T-cell (primary cell): ENCODE measurements at regions of chr13 and their contacts with region 1.

Region 1: DNA sequence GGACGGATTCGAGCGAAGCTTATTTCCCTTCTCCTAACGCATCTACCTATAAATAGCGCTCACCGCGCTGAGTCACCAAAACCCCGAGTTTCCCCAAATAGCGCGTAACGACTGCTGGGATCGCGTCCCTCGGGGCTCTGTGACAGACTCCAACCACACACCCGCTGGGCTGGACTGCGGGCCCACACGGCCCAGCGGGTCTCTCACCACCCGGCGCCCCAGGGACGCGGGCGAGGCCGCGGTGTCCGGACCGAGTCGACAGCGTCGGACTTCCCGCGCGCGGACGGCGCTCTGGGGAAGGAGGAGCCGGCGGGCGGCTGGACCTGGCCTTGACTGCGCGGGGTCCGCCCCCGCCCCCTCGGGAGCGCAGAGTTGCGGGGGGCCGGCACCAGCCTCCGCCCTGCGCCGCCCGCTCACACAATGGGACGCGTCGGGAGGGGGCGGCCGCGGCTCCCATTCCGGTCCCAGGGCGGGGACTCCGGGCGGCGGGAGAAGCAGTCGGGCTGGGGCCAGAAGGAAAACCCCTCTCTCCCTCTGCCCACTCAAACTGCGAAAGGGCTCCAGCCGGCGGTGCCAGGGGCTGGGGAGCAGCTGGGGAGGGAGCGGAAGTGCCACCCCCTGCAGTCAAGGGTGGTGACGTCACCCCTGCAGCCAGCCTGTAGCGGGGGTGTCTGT is 108.8 kb downstream of the KCNRG start:
- DNase-seq: peak in 34 of 35 experiments; percentile 48 to 89 (median 62)
- ATAC-seq: peak; percentile 71 to 76 (median 72)
- H3K4me3 ChIP-seq: peak overlapping the region; percentile 74
- H3K4me3 Mint-ChIP-seq: peak overlapping the region; percentile 84 to 92 (median 85)
- H3K27ac ChIP-seq: peak overlapping the region; percentile 93
- H3K27ac Mint-ChIP-seq: peak overlapping the region; percentile 90 to 95
- H3K4me1 ChIP-seq: peaks cover 22 to 46% of the 10 kb centered on the region in 2 experiments
- H3K4me1 Mint-ChIP-seq: peaks cover 40 to 61% (median 51%) of the 10 kb centered on the region in 3 donors
- H3K27me3 ChIP-seq: peaks cover 0 to 25% of the 10 kb centered on the region in 2 experiments
- H3K27me3 Mint-ChIP-seq: peaks cover 4 to 12% of the 10 kb centered on the region in 2 donors

Region 2: DNA sequence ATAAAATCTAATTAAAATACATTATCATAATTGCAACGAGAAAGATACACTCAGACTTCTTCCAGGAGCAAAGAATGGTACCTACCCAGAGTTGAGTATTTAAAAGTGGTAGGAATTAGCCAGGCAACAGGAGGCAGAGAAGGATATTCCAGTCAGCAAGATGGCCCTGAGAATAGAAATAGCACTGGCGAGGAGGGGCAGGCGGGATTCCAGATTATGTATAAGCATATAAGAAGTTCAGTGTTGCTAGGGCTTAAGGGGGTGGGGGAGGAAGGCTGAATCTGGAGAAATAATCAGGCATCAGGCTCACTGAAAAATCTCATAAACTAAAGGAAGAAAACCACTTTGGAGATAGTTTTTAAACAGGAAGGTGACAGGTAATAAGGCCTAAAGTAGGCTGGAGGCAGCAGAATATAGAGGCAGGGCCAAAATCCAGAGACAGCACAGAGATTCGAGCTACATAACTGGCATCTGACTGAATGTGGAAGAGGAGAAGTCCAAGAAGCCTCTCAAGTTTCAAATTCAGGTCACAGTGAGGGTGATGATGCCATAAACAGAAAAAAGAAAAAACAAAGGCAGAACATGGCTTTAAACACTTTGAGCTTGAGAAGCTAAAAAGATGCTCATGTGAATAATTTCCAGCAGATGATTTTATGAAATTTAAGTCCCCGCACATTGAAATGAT is 339.0 kb before region 1 on chr13:
- CTCF ChIA-PET with region 1: no interaction called
- POLR2A ChIA-PET with region 1: interaction called in 1 of 2 experiments, 11 read pairs
- DNase-seq: no peak
- ATAC-seq: no peak
- H3K4me3 ChIP-seq: no peak overlapping the region
- H3K4me3 Mint-ChIP-seq: no peak overlapping the region
- H3K27ac ChIP-seq: no peak overlapping the region
- H3K27ac Mint-ChIP-seq: no peak overlapping the region
- H3K4me1 ChIP-seq: peaks cover 0 to 1% of the 10 kb centered on the region in 2 experiments
- H3K4me1 Mint-ChIP-seq: peaks cover 73 to 79% (median 75%) of the 10 kb centered on the region in 3 donors
- H3K27me3 ChIP-seq: no peaks in the 10 kb centered on the region
- H3K27me3 Mint-ChIP-seq: no peaks in the 10 kb centered on the region

Region 3: DNA sequence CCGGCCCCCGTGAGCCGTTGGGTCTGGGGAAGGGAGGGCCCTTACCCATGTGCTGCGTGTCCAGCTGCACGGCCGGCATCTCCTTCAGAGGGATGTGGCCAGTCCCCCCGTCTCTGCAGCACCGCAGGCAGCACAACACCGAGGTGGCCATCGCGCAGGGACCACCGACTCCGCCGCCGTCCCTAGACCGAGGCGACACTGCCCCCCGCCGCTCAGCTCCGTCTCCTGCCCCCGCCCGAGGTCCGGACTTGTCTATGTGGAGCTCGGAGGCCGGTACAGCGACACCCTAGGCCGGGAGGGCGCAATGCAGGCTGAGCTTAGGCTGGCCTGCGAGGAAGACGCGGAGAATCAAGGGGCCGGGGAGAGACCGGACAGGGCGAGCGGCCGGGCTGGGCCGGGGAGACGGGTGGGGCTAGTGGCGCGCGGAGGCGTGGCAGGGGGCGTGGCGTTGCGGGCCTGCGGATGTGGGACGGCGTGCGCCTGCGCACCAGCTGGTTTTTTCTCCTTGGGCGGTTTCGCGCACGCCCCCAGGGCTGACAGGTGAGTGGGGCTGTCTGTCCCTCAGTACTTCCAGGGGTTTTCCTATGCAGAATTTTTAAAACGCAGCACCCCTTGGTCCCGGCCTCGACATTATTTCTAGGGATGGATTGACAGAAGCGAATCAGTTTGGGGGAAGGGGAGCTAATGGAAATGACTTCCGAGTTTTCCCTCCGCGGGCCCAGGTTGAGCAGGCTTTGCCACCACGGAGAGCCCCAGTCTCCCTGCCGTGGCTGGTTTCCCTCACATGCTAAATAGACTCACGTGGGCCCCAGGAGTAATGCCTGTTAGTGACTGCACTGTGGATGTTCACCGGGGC is 187.7 kb before region 1 on chr13 and contains the start of gene SPRYD7:
- CTCF ChIA-PET with region 1: no interaction called
- POLR2A ChIA-PET with region 1: interaction called, 3 to 11 read pairs
- DNase-seq: peak; percentile 75 to 96 (median 87)
- ATAC-seq: peak; percentile 84 to 89 (median 88)
- H3K4me3 ChIP-seq: peak within 1 kb of the TSS; percentile 91 to 97
- H3K4me3 Mint-ChIP-seq: peak within 1 kb of the TSS; percentile 85 to 95 (median 90)
- H3K27ac ChIP-seq: peak within 1 kb of the TSS; percentile 39
- H3K27ac Mint-ChIP-seq: peak within 1 kb of the TSS; percentile 72 to 88
- H3K4me1 ChIP-seq: peaks cover 5 to 14% of the 10 kb centered on the region in 2 experiments
- H3K4me1 Mint-ChIP-seq: peaks cover 13 to 25% (median 22%) of the 10 kb centered on the region in 3 donors
- H3K27me3 ChIP-seq: peaks cover 0 to 11% of the 10 kb centered on the region in 2 experiments
- H3K27me3 Mint-ChIP-seq: no peaks in the 10 kb centered on the region
- total RNA-seq, gene SPRYD7: 1.6 to 4.7 (median 3.2) TPM

Region 4: DNA sequence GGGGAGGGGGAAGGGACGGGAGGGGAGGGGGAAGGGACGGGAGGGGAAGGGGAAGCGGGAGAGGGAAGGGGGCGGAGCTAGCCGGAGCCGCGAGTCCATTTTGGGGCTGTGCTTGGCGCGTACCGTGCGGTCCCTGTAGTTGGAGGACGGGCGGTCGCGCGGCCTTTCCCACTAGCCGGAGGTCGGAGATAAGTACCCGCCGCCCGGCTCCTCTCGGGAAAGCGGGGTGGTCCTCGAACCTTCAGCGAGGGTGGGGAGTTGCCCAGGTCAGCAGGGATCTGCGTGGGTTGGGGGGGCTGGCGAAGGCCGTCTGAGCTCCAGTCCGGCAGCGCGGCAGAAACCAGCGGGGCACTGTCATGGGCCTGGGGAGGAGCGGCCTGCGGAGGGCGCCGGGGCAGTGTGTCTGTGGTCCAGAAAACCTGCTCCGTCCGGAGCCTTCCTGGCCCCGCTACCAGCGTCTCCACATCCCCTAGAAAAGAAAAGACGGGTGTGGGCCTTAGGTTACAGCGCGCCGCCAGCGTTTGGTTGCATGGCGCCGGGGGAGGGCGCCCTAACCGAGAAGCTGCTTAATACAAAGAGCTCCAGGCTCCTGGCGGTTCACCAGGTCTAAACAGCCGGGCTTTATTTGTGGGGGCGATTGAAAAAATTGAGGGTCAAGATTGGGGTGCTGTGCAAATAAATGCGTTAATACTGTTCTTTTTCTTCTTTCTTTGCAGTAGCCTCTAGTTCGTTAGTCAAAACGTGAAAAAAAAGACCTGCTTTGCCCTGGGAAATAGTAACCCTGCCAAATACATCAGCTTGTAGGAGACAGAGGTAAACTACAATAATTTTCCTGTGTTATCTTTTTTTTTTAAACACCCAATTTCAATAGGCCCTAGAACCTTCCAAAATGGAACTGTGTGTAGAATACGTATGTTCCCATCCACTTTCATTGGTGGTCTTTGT is 126.8 kb before region 1 on chr13 and contains the start of gene TRIM13:
- CTCF ChIA-PET with region 1: interaction called, 7 to 34 read pairs
- POLR2A ChIA-PET with region 1: interaction called in 1 of 2 experiments, 12 read pairs
- DNase-seq: peak; percentile 66 to 89 (median 79)
- ATAC-seq: peak; percentile 83 to 85 (median 84)
- H3K4me3 ChIP-seq: peak within 1 kb of the TSS; percentile 81 to 98
- H3K4me3 Mint-ChIP-seq: peak within 1 kb of the TSS; percentile 85 to 86 (median 85)
- H3K27ac ChIP-seq: peak within 1 kb of the TSS; percentile 83
- H3K27ac Mint-ChIP-seq: peak within 1 kb of the TSS; percentile 85 to 87
- H3K4me1 ChIP-seq: peaks cover 26 to 34% of the 10 kb centered on the region in 2 experiments
- H3K4me1 Mint-ChIP-seq: peaks cover 39 to 54% (median 53%) of the 10 kb centered on the region in 3 donors
- H3K27me3 ChIP-seq: no peaks in the 10 kb centered on the region
- H3K27me3 Mint-ChIP-seq: no peaks in the 10 kb centered on the region
- total RNA-seq, gene TRIM13: 20.5 to 27.8 (median 23.4) TPM

Region 5: DNA sequence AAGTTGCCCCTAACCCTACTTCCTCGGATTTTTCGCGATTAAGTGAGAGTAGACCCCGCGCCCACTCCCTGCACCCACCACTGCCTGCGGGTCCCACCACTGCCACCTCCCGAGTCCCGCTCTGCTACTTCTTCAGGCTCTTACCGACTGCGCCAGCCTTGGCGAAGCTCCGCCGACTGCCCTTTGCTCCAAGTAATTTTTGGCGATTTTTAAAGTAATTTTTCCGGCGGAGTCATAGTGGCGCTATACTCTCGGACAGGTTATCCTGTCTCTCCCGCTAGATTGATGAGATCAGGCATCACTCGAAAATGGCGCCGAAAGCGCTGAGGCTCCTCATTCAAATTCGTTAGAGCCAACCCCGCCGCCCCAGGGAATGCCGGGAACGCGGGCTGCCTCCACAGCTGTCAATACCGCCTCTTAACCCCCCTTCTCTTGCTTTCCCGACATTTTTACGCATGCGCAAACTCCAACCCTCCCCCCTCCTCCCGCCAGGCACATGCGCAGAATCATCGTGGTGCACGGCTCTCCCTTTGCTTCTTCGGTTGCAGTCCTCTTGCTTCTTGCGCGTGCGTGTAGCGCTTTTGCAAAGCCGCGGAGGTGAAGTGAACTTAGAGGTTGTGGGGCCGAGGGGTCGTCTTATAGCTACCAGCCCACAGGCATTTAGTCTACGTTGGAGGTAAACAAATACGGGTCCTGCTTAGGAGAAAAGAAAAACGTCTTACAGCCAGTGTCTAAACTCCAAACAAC is 42.1 kb before region 1 on chr13:
- CTCF ChIA-PET with region 1: interaction called, 30 to 68 read pairs
- POLR2A ChIA-PET with region 1: interaction called, 23 read pairs
- DNase-seq: peak; percentile 93 to 99 (median 97)
- ATAC-seq: peak; percentile 76 to 79 (median 77)
- H3K4me3 ChIP-seq: peak overlapping the region; percentile 87 to 96
- H3K4me3 Mint-ChIP-seq: peak overlapping the region; percentile 94 to 99 (median 96)
- H3K27ac ChIP-seq: peak overlapping the region; percentile 85
- H3K27ac Mint-ChIP-seq: peak overlapping the region; percentile 95 to 96
- H3K4me1 ChIP-seq: peaks cover 31 to 37% of the 10 kb centered on the region in 2 experiments
- H3K4me1 Mint-ChIP-seq: peaks cover 38 to 66% (median 61%) of the 10 kb centered on the region in 3 donors
- H3K27me3 ChIP-seq: peaks cover 0 to 10% of the 10 kb centered on the region in 2 experiments
- H3K27me3 Mint-ChIP-seq: peaks cover 0 to 9% of the 10 kb centered on the region in 2 donors

Region 6: DNA sequence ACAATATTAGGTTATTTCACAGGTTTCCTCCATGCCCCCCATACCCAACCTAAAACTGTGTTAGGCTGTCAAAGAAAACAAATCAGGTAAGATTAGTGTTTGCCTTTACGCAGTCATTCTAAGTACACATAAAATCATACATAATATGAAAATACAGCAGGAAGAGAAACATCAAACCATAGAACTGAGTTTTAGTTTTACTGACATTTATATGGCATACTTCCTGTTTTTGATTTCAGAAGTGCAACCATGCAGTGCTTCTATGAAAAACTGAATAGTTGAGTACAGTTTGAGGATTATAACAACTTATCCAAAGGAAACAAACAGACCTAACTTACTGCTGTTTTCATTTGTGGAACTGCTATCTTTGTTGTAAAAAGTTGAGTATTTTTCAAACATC is 17.4 kb before region 1 on chr13:
- CTCF ChIA-PET with region 1: interaction called in 1 of 2 experiments, 4 read pairs
- POLR2A ChIA-PET with region 1: interaction called, 4 to 10 read pairs
- DNase-seq: peak in 1 of 35 experiments; percentile 32
- ATAC-seq: peak; percentile 70 to 82 (median 74)
- H3K4me3 ChIP-seq: no peak overlapping the region
- H3K4me3 Mint-ChIP-seq: peak overlapping the region; percentile 49 to 64 (median 54)
- H3K27ac ChIP-seq: peak overlapping the region; percentile 73
- H3K27ac Mint-ChIP-seq: peak overlapping the region; percentile 95 to 97
- H3K4me1 ChIP-seq: peaks cover 6 to 27% of the 10 kb centered on the region in 2 experiments
- H3K4me1 Mint-ChIP-seq: peaks cover 34 to 65% (median 54%) of the 10 kb centered on the region in 3 donors
- H3K27me3 ChIP-seq: no peaks in the 10 kb centered on the region
- H3K27me3 Mint-ChIP-seq: no peaks in the 10 kb centered on the region

Region 7: DNA sequence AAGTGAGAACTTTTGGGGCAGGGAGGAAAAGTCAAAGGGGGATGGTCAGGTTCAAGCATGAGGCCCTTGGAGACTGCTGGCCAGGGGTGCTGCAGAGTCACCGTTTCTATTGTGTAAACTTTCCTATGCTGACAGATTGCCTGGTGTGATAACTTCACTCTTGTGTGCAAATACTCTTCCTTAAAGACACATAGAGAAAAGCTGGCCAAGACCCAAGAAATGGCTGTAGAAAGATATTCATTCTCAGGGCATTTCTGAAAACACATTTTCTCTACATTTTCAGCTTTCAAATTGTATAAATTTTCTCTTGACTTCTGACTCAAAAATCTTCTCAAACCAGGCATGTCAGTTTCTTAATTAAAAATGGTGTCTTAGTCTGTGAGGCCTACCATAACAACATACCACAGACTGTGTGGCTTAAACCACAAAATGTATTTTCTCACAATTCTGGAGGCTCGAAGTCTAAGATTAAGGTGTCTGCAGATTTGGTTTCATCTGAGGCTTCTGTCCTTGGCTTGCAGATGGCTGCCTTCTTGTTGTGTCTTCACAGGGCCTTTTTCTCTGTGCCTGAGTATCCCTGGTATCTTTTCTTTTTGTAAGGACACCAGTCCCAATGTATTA is 195.7 kb after region 1 on chr13:
- CTCF ChIA-PET with region 1: no interaction called
- POLR2A ChIA-PET with region 1: no interaction called
- DNase-seq: peak in 1 of 35 experiments; percentile 47
- ATAC-seq: peak; percentile 26 to 76 (median 41)
- H3K4me3 ChIP-seq: no peak overlapping the region
- H3K4me3 Mint-ChIP-seq: no peak overlapping the region
- H3K27ac ChIP-seq: peak overlapping the region; percentile 73
- H3K27ac Mint-ChIP-seq: peak overlapping the region; percentile 74 to 79
- H3K4me1 ChIP-seq: peaks cover 12 to 17% of the 10 kb centered on the region in 2 experiments
- H3K4me1 Mint-ChIP-seq: peaks cover 23 to 33% (median 23%) of the 10 kb centered on the region in 3 donors
- H3K27me3 ChIP-seq: no peaks in the 10 kb centered on the region
- H3K27me3 Mint-ChIP-seq: no peaks in the 10 kb centered on the region